ENCODE measurements at regions of chr12 and their contacts with region 1.

Region 1: DNA sequence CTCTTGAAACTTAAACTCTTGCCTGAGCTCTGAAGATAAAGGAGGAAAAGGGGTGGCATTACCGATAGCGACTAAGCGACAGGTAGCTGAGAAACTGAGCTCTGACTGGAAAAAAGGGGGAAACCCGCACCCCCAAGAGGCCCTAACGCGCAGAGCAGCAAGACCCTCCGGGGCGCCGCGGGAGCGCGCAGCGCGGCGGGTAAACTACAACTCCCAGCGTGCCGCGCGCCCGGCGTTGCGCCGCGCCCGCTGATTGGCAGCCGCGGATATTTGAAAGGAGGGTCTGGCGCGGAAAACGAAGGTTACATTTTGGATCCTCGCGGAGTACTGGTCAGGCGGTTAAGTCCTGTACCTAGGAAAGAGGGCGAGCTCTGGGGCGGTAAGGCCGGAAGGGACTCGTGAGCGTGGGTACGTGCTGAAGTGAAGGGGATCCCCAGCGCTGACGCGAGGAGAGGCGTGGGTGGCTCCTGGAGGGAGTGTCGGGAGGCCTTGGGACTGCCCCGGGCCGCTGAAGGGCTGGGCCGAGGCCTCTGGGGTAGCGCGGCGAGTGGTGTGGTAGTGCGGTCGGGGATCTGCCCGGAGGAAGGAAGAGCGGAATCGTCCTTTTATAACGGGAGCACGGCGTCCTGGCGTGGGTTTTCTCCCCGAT is at the start of gene ESPL1:
- DNase-seq: peak; percentile 71
- H3K4me3 Mint-ChIP-seq: peak within 1 kb of the TSS; percentile 90
- H3K27ac Mint-ChIP-seq: peak within 1 kb of the TSS; percentile 76
- H3K4me1 Mint-ChIP-seq: peaks cover 15% of the 10 kb centered on the region
- H3K27me3 Mint-ChIP-seq: no peaks in the 10 kb centered on the region
- CTCF ChIP-seq: no peak
- total RNA-seq, gene ESPL1: 9.8 and 12.1 TPM in 2 replicates

Region 2: DNA sequence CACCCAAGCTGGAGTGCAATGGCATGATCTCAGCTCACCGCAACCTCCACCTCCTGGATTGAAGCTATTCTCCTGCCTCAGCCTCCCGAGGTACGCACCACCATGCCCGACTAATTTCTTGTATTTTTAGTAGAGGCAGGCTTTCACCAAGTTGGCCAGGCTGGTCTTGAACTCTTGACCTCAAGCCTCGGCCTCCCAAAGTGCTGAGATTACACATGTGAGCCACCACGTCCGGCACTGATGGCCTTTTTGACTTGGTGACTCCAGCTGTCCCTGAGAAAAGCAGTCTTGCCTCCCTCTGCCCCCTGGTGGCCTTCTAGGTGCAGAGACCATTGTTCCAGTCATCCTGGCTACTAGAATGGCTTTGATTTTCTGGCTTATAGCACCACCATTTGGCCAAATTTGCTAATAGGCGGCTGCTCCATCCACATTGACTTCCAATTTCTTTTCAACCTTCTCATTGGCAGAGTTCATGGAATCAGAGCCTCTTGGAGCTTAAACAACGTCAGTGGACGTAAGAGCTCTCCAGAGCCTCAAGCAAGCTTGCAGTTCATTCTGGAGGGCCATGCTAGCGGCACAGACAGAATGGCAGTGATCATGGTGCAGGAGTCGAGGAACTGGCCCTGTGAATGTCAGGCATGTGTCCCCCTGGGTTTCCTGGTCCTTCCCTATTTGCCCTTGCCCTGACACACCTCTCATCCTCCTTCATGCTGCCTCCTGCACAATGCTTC is 287.3 kb before region 1 on chr12:
- CTCF ChIA-PET with region 1: no interaction called
- POLR2A ChIA-PET with region 1: no interaction called
- intact Hi-C with region 1: no loop called
- DNase-seq: peak; percentile 96
- H3K4me3 Mint-ChIP-seq: no peak overlapping the region
- H3K27ac Mint-ChIP-seq: no peak overlapping the region
- H3K4me1 Mint-ChIP-seq: peaks cover 7% of the 10 kb centered on the region
- H3K27me3 Mint-ChIP-seq: no peaks in the 10 kb centered on the region
- CTCF ChIP-seq: peak; percentile 95

Region 3: GRCh38 chr12:53014709-53015108 is 253.4 kb before region 1 on chr12:
- CTCF ChIA-PET with region 1: no interaction called
- POLR2A ChIA-PET with region 1: no interaction called
- intact Hi-C with region 1: no loop called
- DNase-seq: no peak
- H3K4me3 Mint-ChIP-seq: no peak overlapping the region
- H3K27ac Mint-ChIP-seq: no peak overlapping the region
- H3K4me1 Mint-ChIP-seq: peaks cover 14% of the 10 kb centered on the region
- H3K27me3 Mint-ChIP-seq: no peaks in the 10 kb centered on the region
- CTCF ChIP-seq: no peak

Region 4: DNA sequence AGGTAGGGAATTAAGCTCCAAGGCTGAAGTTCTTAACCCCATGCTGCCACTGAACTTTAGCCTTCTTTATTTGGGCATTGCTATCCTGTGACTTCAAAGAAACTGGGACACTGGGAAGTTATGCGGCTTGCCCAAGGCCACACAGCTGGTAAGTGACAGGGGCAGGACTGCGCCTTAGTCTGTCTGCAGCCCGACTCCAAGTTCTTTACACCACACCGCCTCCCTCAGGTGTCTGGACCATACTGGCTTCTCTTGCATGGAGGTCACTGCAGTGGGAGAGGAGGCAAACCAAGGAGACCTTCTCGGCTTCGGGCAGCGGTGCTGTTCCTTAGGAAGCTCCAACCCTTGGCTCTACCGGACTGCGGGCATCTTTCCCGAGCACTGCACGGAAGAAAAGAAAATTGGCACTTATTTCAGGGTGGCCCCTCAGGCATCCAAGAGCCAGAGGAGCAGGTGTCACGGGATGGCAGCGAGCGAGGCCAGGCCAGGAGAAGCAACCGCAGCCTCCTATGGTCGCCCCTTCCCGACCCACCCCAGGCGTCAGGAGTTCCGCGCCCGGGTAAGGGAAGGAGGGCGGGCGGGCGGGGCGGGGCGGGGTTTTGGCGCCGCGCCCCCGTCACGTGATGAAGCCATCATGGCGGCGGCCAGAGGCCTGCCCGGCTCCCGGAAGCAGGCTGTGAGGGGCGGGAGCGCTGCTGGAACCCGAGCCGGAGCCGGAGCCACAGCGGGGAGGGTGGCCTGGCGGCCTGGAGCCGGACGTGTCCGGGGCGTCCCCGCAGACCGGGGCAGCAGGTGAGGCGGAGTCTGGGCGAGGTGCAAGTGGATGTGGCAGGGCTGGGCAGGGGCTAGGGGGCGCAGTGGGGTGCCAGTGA is 16.4 kb before region 1 on chr12:
- CTCF ChIA-PET with region 1: interaction called, 28 read pairs
- POLR2A ChIA-PET with region 1: interaction called, 20 read pairs
- intact Hi-C with region 1: no loop called
- DNase-seq: peak; percentile 77
- H3K4me3 Mint-ChIP-seq: peak overlapping the region; percentile 87
- H3K27ac Mint-ChIP-seq: peak overlapping the region; percentile 83
- H3K4me1 Mint-ChIP-seq: peaks cover 25% of the 10 kb centered on the region
- H3K27me3 Mint-ChIP-seq: no peaks in the 10 kb centered on the region
- CTCF ChIP-seq: peak; percentile 48

Region 5: GRCh38 chr12:53287741-53288216 is 19.7 kb after region 1 on chr12:
- CTCF ChIA-PET with region 1: interaction called, 29 read pairs
- POLR2A ChIA-PET with region 1: interaction called, 8 read pairs
- intact Hi-C with region 1: no loop called
- DNase-seq: peak; percentile 61
- H3K4me3 Mint-ChIP-seq: no peak overlapping the region
- H3K27ac Mint-ChIP-seq: peak overlapping the region; percentile 24
- H3K4me1 Mint-ChIP-seq: peaks cover 6% of the 10 kb centered on the region
- H3K27me3 Mint-ChIP-seq: no peaks in the 10 kb centered on the region
- CTCF ChIP-seq: peak; percentile 74